ENCODE measurements at regions of chr17 and their contacts with region 1.

Region 1: GRCh38 chr17:74240618-74241205 is 27.3 kb downstream of the TTYH2 start:
- DNase-seq: peak in 4 of 5 donors; percentile 55 to 72 (median 64)
- ATAC-seq: peak in 2 of 4 donors; percentile 6 to 35
- H3K4me3 ChIP-seq: no peak overlapping the region
- H3K27ac ChIP-seq: peak overlapping the region in 5 of 12 donors; percentile 46 to 79 (median 61)
- H3K4me1 ChIP-seq: peaks cover 0 to 73% (median 43%) of the 10 kb centered on the region in 12 donors
- H3K27me3 ChIP-seq: no peaks in the 10 kb centered on the region
- CTCF ChIP-seq: no peak
- POLR2A ChIP-seq: no peak

Region 2: GRCh38 chr17:74296548-74296936 is 55.8 kb after region 1 on chr17:
- intact Hi-C with region 1: loop called in 2 of 10 experiments (anchors 2 kb)
- DNase-seq: peak; percentile 68 to 87 (median 76)
- ATAC-seq: peak; percentile 74 to 84 (median 81)
- H3K4me3 ChIP-seq: peak overlapping the region in 1 of 12 donors; percentile 5
- H3K27ac ChIP-seq: peak overlapping the region; percentile 53 to 97 (median 84)
- H3K4me1 ChIP-seq: peaks cover 0 to 18% (median 10%) of the 10 kb centered on the region in 12 donors
- H3K27me3 ChIP-seq: no peaks in the 10 kb centered on the region
- CTCF ChIP-seq: peak; percentile 50 to 78 (median 66)
- POLR2A ChIP-seq: no peak